ENCODE measurements at regions of chr12 and their contacts with region 1.

Region 1: DNA sequence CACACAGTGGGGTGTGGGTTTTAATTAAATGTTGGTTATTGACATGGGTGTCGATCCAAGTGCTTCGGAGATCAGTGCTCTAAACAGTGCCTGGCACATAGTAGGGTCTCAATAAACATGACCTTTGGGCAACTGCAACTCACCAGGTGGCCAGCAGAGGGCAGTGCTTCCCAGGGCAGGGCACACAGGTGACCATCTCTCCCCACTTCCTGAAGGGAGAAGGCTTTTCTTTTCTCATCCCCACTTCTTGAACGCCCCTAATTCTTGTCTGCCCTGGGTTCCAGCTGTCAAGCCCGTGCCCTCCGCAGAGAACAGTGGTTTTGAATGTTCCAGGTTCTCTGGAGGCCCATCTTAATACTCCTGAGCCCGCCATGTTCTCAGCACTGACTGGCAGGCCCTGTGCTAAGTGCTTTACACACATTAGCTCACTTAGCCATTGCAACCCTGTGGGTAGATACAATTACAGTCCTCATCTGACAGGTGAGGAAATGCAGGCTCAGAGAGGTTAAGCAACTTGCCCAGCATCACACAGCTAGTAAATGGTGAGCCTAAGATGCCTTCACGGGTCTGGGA is 16.3 kb downstream of the RAPGEF3 start:
- DNase-seq: peak; percentile 78
- H3K4me3 Mint-ChIP-seq: no peak overlapping the region
- H3K27ac Mint-ChIP-seq: no peak overlapping the region
- H3K4me1 Mint-ChIP-seq: peaks cover 27% of the 10 kb centered on the region
- H3K27me3 Mint-ChIP-seq: no peaks in the 10 kb centered on the region
- CTCF ChIP-seq: peak; percentile 93

Region 2: GRCh38 chr12:47758834-47759690 is 16.7 kb after region 1 on chr12 and contains the start of gene RAPGEF3:
- CTCF ChIA-PET with region 1: interaction called, 21 read pairs
- intact Hi-C with region 1: loop called (anchors 2 kb)
- DNase-seq: peak; percentile 83
- H3K4me3 Mint-ChIP-seq: peak within 1 kb of the TSS; percentile 82
- H3K27ac Mint-ChIP-seq: peak within 1 kb of the TSS; percentile 85
- H3K4me1 Mint-ChIP-seq: peaks cover 34% of the 10 kb centered on the region
- H3K27me3 Mint-ChIP-seq: no peaks in the 10 kb centered on the region
- CTCF ChIP-seq: peak; percentile 29
- total RNA-seq, gene RAPGEF3: 8.2 and 11.0 TPM in 2 replicates

Region 3: GRCh38 chr12:47767216-47767724 is 24.9 kb after region 1 on chr12:
- CTCF ChIA-PET with region 1: interaction called, 75 read pairs
- intact Hi-C with region 1: loop called (anchors 1 kb)
- DNase-seq: peak; percentile 79
- H3K4me3 Mint-ChIP-seq: no peak overlapping the region
- H3K27ac Mint-ChIP-seq: no peak overlapping the region
- H3K4me1 Mint-ChIP-seq: peaks cover 3% of the 10 kb centered on the region
- H3K27me3 Mint-ChIP-seq: no peaks in the 10 kb centered on the region
- CTCF ChIP-seq: peak; percentile 32

Region 4: GRCh38 chr12:47779301-47779942 is 37.1 kb after region 1 on chr12:
- CTCF ChIA-PET with region 1: interaction called, 21 read pairs
- intact Hi-C with region 1: no loop called
- DNase-seq: peak; percentile 86
- H3K4me3 Mint-ChIP-seq: no peak overlapping the region
- H3K27ac Mint-ChIP-seq: no peak overlapping the region
- H3K4me1 Mint-ChIP-seq: no peaks in the 10 kb centered on the region
- H3K27me3 Mint-ChIP-seq: no peaks in the 10 kb centered on the region
- CTCF ChIP-seq: peak; percentile 74